ENCODE measurements at regions of chr4 and their contacts with region 1.

Region 1: DNA sequence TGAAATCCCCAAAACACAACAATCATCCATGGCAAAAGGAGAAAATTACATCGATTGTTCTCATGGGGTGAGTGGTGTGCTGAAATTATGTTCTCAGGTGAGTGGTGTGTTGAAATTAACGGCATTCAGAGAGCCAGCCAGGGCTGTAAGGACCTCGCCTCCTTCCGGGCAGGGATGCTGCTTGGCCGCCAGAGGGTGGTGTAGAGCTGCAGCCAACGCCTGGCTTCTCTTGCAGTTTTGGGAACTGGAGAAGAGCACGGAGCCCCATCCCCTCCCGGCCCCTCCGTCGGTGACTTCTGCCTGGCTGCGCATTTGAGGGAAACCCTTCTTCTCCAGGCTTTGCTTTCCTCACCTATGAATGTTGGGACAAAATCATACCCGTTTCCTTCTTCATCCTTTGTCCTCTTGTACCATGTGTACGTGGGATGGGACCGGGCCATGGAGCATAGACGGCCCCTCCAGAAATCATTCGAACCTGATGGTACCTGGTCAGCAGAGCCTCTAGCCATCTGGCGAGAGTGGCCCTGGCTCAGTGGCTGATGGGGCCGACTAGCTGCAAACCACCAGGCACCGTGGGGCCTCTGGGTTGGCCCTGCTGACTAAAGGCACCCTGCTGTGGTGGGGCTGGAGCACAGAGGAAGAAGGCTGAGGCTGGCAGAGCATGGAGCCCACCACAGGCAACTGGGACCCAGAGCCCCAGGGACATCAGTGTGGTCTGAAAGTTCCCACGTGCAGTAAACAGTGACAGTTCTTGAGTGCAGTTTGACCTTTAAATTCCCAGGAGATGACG is 28.4 kb downstream of the TRMT44 start:
- DNase-seq: peak; percentile 8
- H3K4me3 ChIP-seq: no peak overlapping the region
- H3K27me3 ChIP-seq: no peaks in the 10 kb centered on the region
- CTCF ChIP-seq: peak; percentile 99

Region 2: GRCh38 chr4:8428293-8429097 is 40.4 kb before region 1 on chr4:
- CTCF ChIA-PET with region 1: no interaction called
- POLR2A ChIA-PET with region 1: no interaction called
- DNase-seq: no peak
- H3K4me3 ChIP-seq: peak overlapping the region; percentile 96
- H3K27me3 ChIP-seq: no peaks in the 10 kb centered on the region
- CTCF ChIP-seq: peak; percentile 62

Region 3: DNA sequence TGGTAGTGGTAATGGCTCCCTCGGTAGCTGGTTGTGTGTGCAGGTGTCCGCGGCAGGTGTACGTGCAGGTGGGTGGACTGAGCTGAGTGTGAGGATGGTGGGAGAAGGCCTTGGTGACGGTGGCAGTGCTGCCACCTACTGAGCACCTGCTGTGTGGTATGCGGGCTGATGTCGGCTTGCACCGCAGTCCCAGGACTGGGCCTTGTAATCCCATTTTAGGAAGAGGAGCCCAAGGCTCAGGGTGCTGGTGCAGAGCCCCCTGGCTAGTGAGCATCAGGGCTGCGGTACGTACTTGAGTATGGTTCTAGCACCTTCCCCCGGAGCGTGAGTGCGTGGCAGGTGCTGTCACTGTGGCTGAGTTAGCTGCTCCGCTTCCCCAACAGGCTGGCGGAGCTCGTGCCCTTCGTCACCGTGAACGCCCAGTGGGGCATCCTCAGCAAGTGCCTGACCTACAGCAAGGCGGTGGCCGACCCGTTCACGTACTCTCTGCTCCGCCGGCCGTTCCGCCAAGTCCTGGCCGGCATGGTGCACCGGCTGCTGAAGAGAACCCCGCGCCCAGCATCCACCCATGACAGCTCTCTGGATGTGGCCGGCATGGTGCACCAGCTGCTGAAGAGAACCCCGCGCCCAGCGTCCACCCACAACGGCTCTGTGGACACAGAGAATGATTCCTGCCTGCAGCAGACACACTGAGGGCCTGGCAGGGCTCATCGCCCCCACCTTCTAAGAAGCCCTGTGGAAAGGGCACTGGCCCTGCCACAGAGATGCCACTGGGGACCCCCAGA is 117.9 kb after region 1 on chr4:
- CTCF ChIA-PET with region 1: interaction called, 108 read pairs
- POLR2A ChIA-PET with region 1: interaction called, 3 read pairs
- DNase-seq: no peak
- H3K4me3 ChIP-seq: no peak overlapping the region
- H3K27me3 ChIP-seq: peaks cover 31% of the 10 kb centered on the region
- CTCF ChIP-seq: no peak

Region 4: GRCh38 chr4:8594097-8595038 is 125.4 kb after region 1 on chr4:
- CTCF ChIA-PET with region 1: interaction called, 108 read pairs
- POLR2A ChIA-PET with region 1: interaction called, 3 read pairs
- DNase-seq: peak; percentile 17
- H3K4me3 ChIP-seq: peak overlapping the region; percentile 77
- H3K27me3 ChIP-seq: peaks cover 4% of the 10 kb centered on the region; the same call in 1 of the 2 replicates
- CTCF ChIP-seq: peak; percentile 75

Region 5: GRCh38 chr4:8599657-8600056 is 130.7 kb after region 1 on chr4:
- CTCF ChIA-PET with region 1: interaction called, 108 read pairs
- POLR2A ChIA-PET with region 1: no interaction called
- DNase-seq: peak; percentile 74
- H3K4me3 ChIP-seq: no peak overlapping the region
- H3K27me3 ChIP-seq: no peaks in the 10 kb centered on the region
- CTCF ChIP-seq: no peak

Region 6: GRCh38 chr4:8607603-8608481 is 138.9 kb after region 1 on chr4:
- CTCF ChIA-PET with region 1: interaction called, 11 read pairs
- POLR2A ChIA-PET with region 1: no interaction called
- DNase-seq: no peak
- H3K4me3 ChIP-seq: no peak overlapping the region
- H3K27me3 ChIP-seq: no peaks in the 10 kb centered on the region
- CTCF ChIP-seq: peak; percentile 96

Region 7: DNA sequence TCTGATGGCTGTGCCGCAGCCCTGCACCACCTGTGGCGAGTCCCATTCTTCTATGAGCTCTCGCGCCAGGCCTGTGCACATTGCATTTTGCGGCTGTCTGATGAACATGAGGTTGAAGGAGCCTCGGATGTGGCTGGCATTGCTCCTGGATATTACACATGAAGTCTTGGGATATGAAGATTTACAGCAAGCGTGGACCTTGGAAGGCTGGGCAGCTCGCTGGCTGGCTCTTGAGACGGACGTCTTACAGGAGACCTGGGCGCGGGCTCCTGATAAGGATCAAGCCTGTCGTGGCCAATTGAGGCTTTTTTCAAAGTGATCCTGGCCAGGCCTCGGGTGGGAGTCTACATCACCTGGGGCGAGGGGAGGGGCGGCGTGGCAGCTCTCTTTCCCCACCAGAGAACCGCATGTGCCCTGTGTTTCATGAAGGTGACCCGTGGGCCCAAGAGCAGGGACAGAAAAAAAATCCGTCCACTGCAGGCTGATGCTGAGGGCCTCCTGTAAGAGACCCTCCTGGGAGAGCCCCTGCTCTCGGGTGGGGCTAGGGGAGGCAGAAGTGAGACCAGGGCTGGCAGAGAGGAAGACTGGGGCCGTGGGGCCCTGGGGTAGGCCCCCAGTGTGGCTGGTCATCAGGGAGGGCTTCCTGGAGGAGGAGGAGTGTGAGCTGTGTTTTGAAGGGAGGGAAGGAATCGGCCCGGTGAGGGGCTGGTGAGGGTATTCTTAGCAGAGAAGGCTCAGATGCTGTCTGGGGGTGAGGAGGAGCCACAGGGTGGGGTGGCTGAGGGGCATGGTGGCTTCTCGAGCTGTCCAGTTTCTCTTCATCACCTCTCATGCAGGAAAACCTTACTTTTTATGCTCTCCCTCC is 147.2 kb after region 1 on chr4:
- CTCF ChIA-PET with region 1: interaction called, 27 read pairs
- POLR2A ChIA-PET with region 1: no interaction called
- DNase-seq: no peak
- H3K4me3 ChIP-seq: no peak overlapping the region
- H3K27me3 ChIP-seq: no peaks in the 10 kb centered on the region
- CTCF ChIP-seq: no peak

Measured in BJ (cell line).